Aorta (tissue), 5 donors: ENCODE measurements at regions of chr11 and their contacts with region 1.

Region 1: GRCh38 chr11:207208-207862 is at the starts of genes BET1L and RIC8A:
- DNase-seq: peak; percentile 97 to 98
- ATAC-seq: peak; percentile 96
- H3K4me3 ChIP-seq: peak within 1 kb of the TSS; percentile 69 to 79
- H3K27ac ChIP-seq: peak within 1 kb of the TSS; percentile 65 to 83
- H3K4me1 ChIP-seq: no peaks in the 10 kb centered on the region
- H3K27me3 ChIP-seq: no peaks in the 10 kb centered on the region
- total RNA-seq, gene BET1L: 50.3 to 55.4 TPM
- total RNA-seq, gene RIC8A: 70.1 to 77.3 TPM

Region 2: DNA sequence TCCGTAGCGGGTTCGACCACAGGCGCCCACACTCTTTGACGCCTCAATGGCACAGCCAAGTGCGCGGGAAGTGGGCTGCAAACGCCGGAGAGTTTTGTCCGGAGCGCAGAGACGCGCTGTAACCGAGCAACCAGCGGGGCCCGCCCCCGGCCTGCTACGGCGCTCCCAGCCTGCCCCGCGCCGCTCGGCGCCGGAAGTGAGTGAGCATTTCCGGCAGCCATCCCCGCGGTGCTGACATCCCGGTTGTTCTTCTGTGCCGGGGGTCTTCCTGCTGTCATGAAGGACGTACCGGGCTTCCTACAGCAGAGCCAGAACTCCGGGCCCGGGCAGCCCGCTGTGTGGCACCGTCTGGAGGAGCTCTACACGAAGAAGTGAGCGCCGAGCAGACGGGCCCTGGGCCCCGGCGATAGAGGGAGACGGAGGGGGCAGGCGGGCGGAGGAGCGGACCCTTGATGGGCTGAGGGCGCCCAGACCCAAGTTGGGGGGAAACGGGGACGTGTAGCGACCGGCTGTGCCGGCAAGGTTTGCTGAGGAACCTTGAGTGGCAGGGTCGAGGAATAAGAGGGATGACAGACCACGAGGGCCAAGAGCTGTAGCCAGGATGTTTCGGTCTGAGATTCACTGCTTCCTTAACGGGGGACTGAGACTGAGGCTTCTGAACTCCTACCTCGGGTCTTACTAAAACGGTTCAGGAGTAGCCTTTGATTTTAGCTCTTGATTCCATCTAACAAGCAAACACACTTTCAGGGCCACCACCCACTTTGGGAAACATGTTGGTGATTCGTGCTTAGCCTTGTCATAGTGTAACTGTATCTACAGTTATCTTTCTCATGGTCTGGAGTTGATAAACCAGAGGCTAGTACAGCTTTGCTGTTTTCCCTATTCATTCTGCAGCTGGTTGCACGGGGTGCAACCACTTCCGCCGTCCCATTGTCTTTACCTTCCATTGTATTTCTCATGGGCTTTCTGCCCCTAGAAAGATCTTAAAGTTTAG is 29.7 kb after region 1 on chr11 and contains the start of gene PSMD13:
- intact Hi-C with region 1: loop called in 1 of 2 experiments (anchors 1 kb)
- DNase-seq: peak; percentile 93 to 96
- ATAC-seq: peak; percentile 97
- H3K4me3 ChIP-seq: peak within 1 kb of the TSS; percentile 90 to 92
- H3K27ac ChIP-seq: peak within 1 kb of the TSS; percentile 31 to 80
- H3K4me1 ChIP-seq: no peaks in the 10 kb centered on the region
- H3K27me3 ChIP-seq: no peaks in the 10 kb centered on the region
- total RNA-seq, gene PSMD13: 75.4 to 80.9 TPM

Region 3: DNA sequence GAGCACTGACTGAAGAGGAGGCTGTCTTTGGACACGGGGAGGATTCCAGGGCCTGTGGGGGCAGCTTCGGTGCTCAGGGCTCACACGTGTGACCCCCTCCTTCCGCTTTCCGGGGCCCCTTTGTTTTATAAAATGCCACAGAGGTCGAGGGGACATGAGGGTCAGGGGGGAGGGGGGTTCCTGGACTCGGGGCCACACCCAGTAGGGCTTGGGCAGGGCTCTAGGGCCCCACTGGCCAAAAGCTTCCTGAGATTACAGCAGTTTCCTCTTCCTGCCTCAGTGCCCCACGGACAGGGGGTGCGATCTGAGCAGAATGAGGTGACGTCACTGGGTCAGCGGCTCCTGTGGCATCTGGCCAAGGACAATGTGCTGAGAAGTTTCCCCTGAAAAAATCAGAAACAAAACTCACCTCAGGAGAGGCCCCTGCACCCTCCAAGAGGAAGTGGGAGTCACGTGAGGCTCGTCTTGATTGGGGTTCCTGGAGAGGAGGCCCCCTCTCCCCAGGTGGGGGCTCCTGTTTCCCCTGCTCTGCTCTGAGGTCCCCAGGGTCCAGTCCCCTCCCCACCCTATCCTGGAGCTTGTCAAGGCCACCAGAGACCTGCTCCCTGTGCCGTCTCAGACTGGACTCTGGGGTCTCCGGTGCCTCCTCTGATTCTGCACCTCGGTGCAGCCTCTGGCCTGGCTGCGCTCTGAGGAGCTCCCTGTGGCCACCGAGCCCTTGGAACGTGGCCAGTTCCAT is 119.7 kb after region 1 on chr11:
- intact Hi-C with region 1: no loop called
- DNase-seq: peak; percentile 91 to 92
- ATAC-seq: peak; percentile 83
- H3K4me3 ChIP-seq: no peak overlapping the region
- H3K27ac ChIP-seq: no peak overlapping the region
- H3K4me1 ChIP-seq: no peaks in the 10 kb centered on the region
- H3K27me3 ChIP-seq: no peaks in the 10 kb centered on the region

Region 4: DNA sequence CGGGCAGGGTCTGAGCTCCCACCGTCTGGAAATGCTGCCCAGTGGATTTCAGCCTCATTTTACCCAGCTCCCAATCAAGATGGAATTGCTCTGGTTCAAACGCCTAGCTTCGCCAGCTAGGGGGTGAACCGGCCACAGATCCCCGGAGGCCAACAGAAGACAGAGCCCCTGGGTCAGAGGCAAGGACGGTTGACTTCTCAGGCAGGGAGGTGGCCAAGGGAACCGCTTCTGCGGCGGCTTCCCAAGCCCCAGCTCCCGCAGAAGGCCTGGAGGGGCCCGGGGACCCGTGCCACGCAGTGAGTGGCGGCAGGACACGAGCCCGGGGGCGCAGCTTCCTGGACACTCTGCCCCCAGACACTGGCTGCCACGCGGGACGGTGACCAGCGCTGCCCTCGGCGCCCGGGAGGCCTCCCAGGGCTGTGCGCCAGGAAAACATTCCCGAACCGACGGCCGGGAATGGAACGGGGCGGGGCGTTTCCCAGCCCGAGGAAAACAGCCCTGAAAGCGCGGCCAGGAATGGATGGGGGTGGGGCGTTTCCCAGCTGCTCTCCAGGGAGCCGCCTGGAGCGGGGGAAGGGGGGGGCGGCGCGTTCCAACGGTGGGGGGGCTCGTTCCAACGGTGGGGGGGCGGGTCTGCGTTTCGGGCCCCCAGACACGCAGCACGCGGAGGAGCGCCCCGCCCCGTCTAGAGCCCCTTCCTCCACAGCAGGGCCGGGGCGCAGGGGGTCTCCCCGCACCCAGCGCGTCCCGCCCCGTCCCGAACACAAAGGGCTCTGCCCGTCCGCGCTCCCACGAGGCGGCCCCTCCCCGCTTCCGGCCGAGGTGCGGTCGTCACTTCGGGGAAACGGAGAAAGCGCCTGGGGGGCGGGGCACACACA is 148.5 kb after region 1 on chr11:
- intact Hi-C with region 1: loop called in 1 of 2 experiments (anchors 5 kb)
- DNase-seq: peak; percentile 97 to 99
- ATAC-seq: peak; percentile 94
- H3K4me3 ChIP-seq: no peak overlapping the region
- H3K27ac ChIP-seq: peak overlapping the region; percentile 88 to 95
- H3K4me1 ChIP-seq: no peaks in the 10 kb centered on the region
- H3K27me3 ChIP-seq: no peaks in the 10 kb centered on the region

Region 5: DNA sequence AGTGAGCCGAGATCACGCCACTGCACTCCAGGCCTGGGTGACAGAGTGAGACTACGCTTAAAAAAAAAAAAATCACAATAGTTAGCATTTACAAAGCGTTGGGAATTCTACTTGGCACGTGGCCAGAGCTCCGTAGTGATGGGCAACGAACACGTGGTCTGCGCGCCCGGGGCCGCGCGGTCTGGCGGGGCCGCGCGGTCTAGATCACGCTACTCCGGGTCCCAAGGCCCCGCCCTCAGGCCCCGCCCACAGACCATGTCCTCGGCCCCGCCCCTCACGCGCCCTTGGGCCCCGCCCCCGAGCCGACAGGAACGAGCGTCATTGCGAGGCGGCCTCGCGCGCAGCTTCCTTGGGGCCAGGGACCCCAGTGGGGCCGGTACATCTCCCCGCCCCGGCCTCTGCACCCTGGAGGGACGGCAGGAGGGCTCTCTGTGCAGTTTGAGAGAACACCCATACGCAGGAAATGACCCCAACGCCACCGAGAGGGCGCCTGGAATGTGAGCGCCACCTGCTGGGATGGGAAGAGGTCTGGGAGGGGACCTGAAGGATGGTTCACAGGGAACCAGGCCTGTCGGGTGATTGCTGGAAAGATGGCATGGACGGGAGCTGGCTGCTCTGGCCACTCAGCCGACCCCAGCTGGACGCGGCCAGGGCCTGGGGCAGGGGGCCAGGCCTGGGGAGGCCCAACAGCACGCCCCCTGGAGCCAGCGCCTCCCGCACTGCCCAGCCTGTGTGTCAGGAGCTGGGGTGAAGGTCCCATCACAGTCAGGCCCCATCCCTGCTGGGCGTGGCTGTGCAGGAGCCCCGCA is 240.8 kb after region 1 on chr11:
- intact Hi-C with region 1: loop called in 1 of 2 experiments (anchors 5 kb)
- DNase-seq: peak; percentile 96 to 99
- ATAC-seq: peak; percentile 95
- H3K4me3 ChIP-seq: peak overlapping the region; percentile 16 to 30
- H3K27ac ChIP-seq: peak overlapping the region; percentile 58 to 85
- H3K4me1 ChIP-seq: no peaks in the 10 kb centered on the region
- H3K27me3 ChIP-seq: no peaks in the 10 kb centered on the region

Region 6: GRCh38 chr11:506238-506994 is 299.1 kb after region 1 on chr11:
- intact Hi-C with region 1: loop called in 1 of 2 experiments (anchors 5 kb)
- DNase-seq: peak; percentile 99 to 100
- ATAC-seq: peak; percentile 94
- H3K4me3 ChIP-seq: peak overlapping the region; percentile 40 to 90
- H3K27ac ChIP-seq: peak overlapping the region; percentile 63 to 100
- H3K4me1 ChIP-seq: no peaks in the 10 kb centered on the region
- H3K27me3 ChIP-seq: no peaks in the 10 kb centered on the region

Region 7: GRCh38 chr11:560305-561147 is 353.2 kb after region 1 on chr11 and contains the starts of genes LMNTD2 and RASSF7:
- intact Hi-C with region 1: no loop called
- DNase-seq: peak; percentile 93 to 95
- ATAC-seq: peak; percentile 92
- H3K4me3 ChIP-seq: peak within 1 kb of the TSS; percentile 41 to 62
- H3K27ac ChIP-seq: no peak within 1 kb of the TSS
- H3K4me1 ChIP-seq: no peaks in the 10 kb centered on the region
- H3K27me3 ChIP-seq: no peaks in the 10 kb centered on the region
- total RNA-seq, gene LMNTD2: 1.4 to 1.9 TPM
- total RNA-seq, gene RASSF7: 5.6 to 8.5 TPM

Region 8: DNA sequence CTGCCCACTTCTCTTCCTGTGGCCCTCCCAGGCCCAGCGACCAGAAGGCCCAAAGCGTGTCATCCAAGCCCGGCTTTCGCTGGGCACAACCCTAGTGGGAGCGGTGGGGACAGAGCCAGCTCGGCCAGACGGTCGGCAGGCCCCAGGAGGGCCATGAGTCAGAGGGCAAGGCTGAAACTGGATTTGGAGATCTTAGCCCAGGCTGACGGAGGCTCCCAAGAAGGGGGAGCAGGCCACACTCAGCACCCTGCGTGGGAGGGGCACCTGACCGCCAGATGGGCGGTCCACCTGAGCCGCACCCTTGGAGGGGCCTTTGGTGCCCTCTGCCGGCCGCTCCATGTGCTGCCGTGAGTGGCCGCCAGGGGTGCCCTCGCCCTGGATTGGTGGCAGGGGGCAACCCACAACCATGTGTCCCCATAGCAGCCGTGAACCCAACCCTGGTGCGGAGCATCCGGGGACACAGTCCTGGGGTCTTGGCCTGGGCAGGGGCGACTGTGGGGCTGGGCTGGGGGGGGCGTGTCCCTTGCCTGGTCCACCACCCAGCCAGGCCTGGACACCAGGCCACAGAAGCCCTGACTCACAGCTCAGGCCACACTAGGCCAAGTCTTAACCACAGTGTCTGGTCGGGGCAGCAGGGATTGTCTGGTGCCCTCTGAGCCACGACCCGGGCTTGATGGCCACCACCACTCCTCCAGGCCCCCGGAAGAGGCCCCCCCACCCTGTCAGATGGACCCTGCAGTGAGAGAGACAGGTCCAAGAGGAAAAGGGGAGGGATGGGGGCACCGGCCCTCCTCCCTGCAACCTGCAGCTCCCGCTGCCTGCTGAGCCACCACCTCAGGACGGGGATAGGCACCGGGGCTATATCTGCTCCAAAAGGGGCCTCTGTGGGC is 520.8 kb after region 1 on chr11:
- intact Hi-C with region 1: no loop called
- DNase-seq: peak; percentile 94 to 97
- ATAC-seq: peak; percentile 91
- H3K4me3 ChIP-seq: no peak overlapping the region
- H3K27ac ChIP-seq: peak overlapping the region in 1 of 2 donors; percentile 22
- H3K4me1 ChIP-seq: no peaks in the 10 kb centered on the region
- H3K27me3 ChIP-seq: no peaks in the 10 kb centered on the region